Testis (tissue), 5 donors: ENCODE measurements at regions of chr13 and their contacts with region 1.

Region 1: DNA sequence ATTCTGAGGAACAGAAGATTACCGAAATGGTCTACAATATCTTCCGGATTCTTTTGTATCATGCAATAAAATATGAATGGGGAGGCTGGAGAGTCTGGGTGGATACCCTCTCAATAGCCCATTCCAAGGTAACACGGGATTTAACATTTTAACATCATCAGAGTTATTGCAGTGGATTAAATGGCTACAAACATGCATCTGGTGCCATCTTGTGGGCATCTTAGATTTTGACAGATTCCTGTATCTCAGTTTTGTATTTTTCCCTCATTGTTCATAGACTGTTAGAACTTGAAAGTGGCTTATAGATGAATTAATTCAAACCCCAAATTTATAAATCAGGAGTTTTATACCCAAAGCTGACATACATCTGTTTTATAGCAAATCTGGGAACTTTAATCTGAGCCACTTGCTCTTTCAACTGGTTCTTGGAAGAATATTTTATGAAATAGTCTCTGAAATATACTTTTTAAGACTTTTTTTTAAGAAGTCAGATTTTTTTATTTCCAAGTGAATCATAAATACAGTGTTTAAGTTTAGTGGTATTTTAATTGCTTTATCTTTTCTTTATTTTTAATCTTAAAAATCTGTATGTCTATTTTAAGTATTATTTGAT is 215.2 kb downstream of the NBEA start:
- DNase-seq: peak; percentile 44
- H3K4me3 ChIP-seq: no peak overlapping the region
- H3K27ac ChIP-seq: no peak overlapping the region
- H3K4me1 ChIP-seq: no peaks in the 10 kb centered on the region
- H3K27me3 ChIP-seq: no peaks in the 10 kb centered on the region
- CTCF ChIP-seq: peak in 2 of 3 experiments; percentile 60 to 62
- POLR2A ChIP-seq: no peak

Region 2: GRCh38 chr13:33927315-33927714 is 1229.9 kb before region 1 on chr13:
- intact Hi-C with region 1: loop called (anchors 10 kb)
- DNase-seq: no peak
- H3K4me3 ChIP-seq: no peak overlapping the region
- H3K27ac ChIP-seq: no peak overlapping the region
- H3K4me1 ChIP-seq: no peaks in the 10 kb centered on the region
- H3K27me3 ChIP-seq: no peaks in the 10 kb centered on the region
- CTCF ChIP-seq: no peak
- POLR2A ChIP-seq: no peak

Region 3: GRCh38 chr13:34555988-34556387 is 601.3 kb before region 1 on chr13:
- intact Hi-C with region 1: no loop called
- DNase-seq: no peak
- H3K4me3 ChIP-seq: no peak overlapping the region
- H3K27ac ChIP-seq: no peak overlapping the region
- H3K4me1 ChIP-seq: no peaks in the 10 kb centered on the region
- H3K27me3 ChIP-seq: no peaks in the 10 kb centered on the region
- CTCF ChIP-seq: no peak
- POLR2A ChIP-seq: no peak

Region 4: DNA sequence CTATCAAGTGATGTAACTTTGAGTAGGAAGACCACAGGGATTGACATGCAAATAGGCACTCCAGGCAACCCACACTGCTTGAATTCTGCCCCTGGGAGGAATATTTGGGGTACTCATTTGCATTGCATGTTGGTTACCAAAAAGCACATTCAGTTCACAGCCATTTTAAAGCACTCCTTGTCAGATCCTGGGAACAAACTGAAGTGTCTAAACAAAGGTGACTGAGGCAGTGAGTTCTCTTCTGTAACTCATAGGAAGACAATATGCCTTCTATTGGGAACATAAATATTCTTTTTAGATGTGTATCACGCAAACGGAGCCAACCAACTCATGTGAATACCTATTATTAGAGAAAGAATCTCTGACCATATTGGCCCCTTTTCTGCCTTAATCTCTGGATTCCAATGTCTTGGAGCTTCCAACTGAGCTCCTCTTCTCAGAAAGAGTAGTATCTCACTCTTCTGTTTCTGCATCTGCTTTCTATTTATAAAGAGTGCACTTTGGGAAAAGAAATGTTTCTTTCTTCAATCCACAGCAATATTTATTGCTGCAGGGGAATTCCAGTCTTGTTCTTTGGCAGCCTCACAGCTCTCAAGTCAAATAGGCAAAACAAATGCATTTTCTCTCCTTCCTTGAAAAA is 340.9 kb before region 1 on chr13:
- intact Hi-C with region 1: no loop called
- DNase-seq: no peak
- H3K4me3 ChIP-seq: no peak overlapping the region
- H3K27ac ChIP-seq: no peak overlapping the region
- H3K4me1 ChIP-seq: peaks cover 5% of the 10 kb centered on the region
- H3K27me3 ChIP-seq: no peaks in the 10 kb centered on the region
- CTCF ChIP-seq: no peak
- POLR2A ChIP-seq: no peak